Astrocyte of the cerebellum (primary cell): ENCODE measurements at regions of chr1 and their contacts with region 1.

Region 1: DNA sequence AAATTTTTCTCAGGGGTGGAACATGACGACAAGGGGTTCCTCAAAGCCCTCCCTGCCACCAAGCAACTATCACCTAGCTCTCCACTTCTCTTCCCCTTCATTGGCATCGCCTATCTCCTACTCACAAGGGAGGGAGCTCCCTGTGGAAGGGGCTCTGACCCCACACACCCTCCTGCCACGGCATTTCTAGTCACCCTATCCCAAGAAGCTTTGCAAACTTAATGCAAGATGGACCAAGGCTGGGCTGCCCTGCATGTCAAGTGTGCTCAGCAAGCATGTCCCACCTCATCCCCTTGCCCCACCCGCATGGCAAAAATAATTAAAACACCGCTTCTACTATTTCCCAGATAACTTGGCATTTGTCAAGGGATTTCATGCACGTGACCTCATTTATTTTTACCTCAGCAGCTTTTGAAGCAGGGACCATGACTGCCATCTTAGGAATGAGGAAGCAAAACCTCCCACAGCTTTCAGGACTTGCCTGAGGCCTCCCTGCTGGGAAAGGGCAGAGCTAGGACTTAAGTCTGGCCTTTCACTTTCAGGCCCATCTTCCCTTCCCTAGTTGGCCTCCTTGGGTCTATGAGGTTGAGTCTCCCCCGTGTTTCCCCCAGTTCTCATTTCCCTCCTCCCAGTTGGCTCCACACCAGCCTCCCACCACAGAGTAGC is 161.3 kb downstream of the TSEN15 start:
- DNase-seq: peak; percentile 90
- H3K4me3 ChIP-seq: no peak overlapping the region
- CTCF ChIP-seq: no peak

Region 2: DNA sequence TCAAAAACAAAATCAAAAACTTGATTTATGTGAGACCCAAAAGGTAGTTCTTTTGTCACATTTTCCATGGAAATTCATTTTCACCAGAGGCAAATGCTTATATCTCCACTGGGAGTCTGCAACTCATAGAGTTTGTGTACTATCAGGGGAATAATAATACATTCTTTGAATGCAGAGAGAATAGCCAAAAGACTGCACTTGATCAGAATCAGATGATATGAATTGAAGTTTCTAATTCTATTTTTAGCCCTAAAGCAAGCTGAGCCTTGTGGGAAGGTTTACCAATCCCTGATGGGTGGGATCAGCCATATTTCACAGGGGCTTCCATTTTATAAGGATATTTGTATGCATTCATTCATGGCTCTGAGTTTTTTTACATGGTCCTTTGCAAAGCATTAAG is 111.6 kb before region 1 on chr1:
- in situ Hi-C with region 1: loop called (anchors 10 kb)
- DNase-seq: no peak
- H3K4me3 ChIP-seq: no peak overlapping the region
- CTCF ChIP-seq: no peak

Region 3: GRCh38 chr1:184310157-184310806 is 97.5 kb after region 1 on chr1:
- in situ Hi-C with region 1: no loop called
- DNase-seq: no peak
- H3K4me3 ChIP-seq: no peak overlapping the region
- CTCF ChIP-seq: no peak